Panc1 (cell line): ENCODE measurements at regions of chr2 and their contacts with region 1.

Region 1: DNA sequence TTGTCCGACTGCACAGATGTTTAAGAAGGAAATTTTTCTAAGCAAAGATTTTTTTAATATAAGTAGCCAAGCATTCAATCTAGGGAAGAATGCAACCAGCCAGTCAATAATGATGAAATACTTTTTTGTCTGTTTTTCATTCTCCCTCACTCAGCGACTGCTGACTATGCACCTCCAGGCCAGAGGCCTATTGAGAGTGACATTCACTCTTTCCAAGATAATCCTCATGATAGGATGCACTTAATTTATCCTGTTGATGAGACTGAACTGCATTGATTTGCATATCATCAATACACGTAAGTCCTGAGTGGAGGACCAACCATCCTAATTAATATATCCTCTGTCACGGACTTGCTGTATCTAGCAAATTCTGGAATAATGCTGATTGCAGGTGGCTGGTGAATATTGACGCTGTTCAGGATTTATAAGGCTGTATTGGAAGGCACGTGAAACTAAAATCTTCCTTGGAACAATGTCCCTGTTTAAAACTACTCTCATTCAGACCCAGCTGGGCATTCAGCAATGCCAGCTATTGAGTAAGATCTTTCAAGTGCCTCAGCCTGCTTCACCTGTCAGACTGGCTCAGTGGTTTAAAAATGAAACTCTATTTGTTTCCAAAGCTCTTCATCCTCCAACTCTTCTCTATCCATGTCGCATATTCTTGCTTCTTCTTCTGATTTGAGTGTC is 142.2 kb downstream of the MAP2 start:
- DNase-seq: no peak
- ATAC-seq: no peak
- H3K4me3 ChIP-seq: no peak overlapping the region
- H3K27ac ChIP-seq: no peak overlapping the region
- H3K4me1 ChIP-seq: no peaks in the 10 kb centered on the region
- H3K27me3 ChIP-seq: no peaks in the 10 kb centered on the region
- CTCF ChIP-seq: no peak

Region 2: GRCh38 chr2:208407667-208408066 is 1158.4 kb before region 1 on chr2:
- CTCF ChIA-PET with region 1: no interaction called
- POLR2A ChIA-PET with region 1: no interaction called
- in situ Hi-C with region 1: no loop called
- intact Hi-C with region 1: loop called (anchors 10 kb)
- DNase-seq: no peak
- ATAC-seq: peak; percentile 88
- H3K4me3 ChIP-seq: no peak overlapping the region
- H3K27ac ChIP-seq: no peak overlapping the region
- H3K4me1 ChIP-seq: no peaks in the 10 kb centered on the region
- H3K27me3 ChIP-seq: peaks cover 49% of the 10 kb centered on the region
- CTCF ChIP-seq: peak; percentile 68